Upper lobe of right lung (tissue), 1 donor: ENCODE measurements at regions of chr22 and their contacts with region 1.

Region 1: DNA sequence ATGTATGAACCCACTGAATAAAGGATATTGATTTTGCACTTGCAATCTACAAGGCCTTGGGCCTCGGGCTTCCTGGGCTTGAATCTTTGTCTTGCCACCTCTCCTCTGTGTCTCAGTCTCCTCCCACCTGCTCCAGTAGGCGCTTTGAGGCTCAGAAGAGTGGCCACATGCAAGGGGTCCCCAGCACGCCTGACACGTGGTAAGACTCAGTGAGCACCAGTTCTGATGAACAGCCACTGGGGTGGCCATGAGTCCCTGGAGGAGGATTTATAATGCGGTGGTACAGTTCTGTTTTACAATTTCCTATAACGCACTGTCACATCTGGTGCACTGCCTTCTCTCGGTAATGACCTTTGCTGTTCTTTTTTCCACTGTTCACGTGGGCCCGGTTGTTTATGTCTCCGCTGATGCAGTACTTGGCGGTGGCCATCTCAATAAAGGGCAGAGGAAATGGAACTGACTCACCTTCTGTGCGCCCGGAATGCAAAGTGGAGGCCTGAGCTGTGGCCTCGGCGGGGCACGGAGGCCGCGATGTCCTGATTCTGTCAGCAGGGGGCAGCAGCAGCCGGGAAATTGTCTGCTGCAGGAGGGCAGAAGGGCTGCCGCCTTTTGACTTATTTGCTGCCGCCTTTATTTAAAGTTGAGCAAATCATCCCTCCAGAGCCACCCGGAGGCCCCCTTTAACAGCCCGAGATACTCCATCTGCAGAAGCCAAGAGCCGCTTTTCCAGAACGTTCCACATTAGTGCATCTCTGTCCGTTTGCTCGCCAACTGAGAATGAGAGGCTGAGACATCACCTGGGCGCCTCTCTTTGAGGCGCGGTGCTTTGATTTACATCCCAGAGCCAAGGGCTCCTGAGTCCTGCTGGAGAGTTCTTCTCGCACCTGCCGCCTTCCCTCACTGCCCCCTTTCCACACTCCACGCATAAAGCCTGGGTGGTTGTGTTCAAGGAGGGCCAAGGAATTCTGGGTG is 6.0 kb upstream of the IFT27 start:
- DNase-seq: peak; percentile 89
- ATAC-seq: peak; percentile 97
- H3K4me3 ChIP-seq: no peak overlapping the region
- H3K27ac ChIP-seq: no peak overlapping the region
- H3K4me1 ChIP-seq: no peaks in the 10 kb centered on the region
- H3K27me3 ChIP-seq: peaks cover 25% of the 10 kb centered on the region
- CTCF ChIP-seq: peak; percentile 96

Region 2: DNA sequence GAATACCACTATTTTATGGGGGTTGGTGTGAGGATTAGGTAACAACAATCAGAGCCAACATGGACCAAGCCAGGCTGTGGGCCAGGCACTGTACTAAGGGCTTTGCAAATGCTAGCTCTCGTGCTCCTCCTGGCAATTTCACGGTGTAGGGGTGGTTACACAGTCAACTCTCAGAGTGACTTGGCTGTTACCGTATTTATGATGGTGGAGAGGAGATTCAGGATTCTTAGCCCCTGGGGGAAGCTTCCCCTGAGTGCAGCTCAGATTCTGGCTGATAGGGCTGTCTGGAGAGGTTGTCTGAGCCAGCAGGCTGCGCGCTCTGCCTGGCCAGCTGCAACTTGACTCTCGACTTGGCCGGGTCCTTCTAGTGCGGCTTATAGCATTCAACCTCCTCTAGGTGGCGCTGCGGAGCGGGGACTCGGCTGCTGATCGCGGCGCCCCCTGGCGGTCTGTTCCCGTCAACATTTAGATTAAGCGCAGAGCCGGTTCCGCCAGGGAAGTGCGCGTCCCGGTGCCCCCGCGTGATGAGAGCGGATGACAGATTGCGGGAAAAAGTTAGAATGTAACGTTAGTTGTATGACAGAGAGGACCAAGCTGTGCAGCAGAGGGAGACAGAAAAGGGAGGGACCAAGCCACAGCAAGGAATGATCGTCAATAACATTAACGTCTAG is 74.3 kb after region 1 on chr22:
- intact Hi-C with region 1: loop called (anchors 10 kb)
- DNase-seq: peak; percentile 95
- ATAC-seq: peak; percentile 92
- H3K4me3 ChIP-seq: no peak overlapping the region
- H3K27ac ChIP-seq: no peak overlapping the region
- H3K4me1 ChIP-seq: peaks cover 11% of the 10 kb centered on the region
- H3K27me3 ChIP-seq: no peaks in the 10 kb centered on the region
- CTCF ChIP-seq: peak; percentile 100

Region 3: DNA sequence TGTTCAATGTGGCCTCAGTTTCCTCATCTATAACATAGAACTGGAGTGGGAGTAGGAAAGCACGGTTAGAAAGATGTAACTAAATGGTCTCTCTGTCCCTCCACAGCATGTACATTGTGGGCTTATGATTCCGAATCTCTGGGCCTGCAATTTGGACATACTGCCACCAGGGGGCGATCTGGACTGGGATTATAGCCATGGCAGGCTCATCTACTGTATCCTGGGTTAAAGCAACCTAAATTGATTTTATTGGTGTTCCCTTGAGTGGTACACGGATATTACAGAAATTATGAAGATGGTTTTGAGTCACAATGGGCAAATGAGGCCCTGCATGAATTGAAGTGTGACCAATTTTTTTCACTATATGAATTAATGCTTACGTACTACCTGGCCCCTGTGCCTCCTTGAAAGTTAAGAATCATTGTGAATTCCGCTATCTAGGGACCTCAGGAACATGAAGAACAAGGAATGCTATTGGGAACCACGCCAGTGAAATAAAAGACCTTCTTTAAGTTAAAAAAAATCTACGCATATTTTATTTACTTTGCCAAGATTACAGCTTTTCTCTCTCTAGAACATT is 204.4 kb after region 1 on chr22:
- intact Hi-C with region 1: loop called (anchors 10 kb)
- DNase-seq: no peak
- ATAC-seq: no peak
- H3K4me3 ChIP-seq: no peak overlapping the region
- H3K27ac ChIP-seq: no peak overlapping the region
- H3K4me1 ChIP-seq: no peaks in the 10 kb centered on the region
- H3K27me3 ChIP-seq: peaks cover 17% of the 10 kb centered on the region
- CTCF ChIP-seq: peak; percentile 54